HAP-1 (cell line): ENCODE measurements at regions of chr1 and their contacts with region 1.

Region 1: DNA sequence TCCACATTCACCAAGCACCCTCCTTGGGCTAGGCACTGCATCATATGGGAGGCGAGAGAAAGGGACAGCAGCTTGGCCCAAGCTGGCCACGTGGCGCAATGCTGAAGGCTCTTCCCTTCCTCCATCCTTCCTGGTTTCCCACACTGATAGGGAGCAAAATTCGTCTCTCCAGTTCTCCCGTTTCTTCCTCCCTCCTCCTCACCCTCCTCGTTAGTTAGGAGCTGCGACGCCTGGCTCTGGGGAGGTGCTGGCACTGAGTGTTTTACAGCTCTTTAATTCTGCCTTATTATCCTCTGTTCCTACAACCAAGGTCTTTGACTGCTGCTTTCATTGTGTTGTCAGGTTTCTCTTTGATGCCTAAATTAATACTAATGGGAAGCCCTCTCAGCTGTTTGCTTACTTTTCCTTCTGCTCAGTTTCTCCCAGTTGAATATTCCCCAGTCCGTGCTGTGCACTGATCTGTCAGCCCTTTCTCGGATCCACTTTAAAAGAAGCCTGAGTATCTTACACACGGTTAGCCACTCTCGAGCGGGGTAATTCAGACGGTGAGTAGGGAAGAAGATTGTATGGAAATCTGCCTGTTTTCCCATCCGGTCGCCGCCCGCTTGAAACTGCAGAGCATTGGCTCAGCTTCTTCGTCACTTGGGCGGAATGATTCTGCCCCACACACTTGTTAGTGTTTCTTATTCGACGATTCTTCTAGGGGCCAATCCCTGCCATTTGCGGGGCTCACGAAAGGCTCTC is 56.2 kb upstream of the SMYD2 start:
- DNase-seq: no peak
- H3K4me3 ChIP-seq: no peak overlapping the region
- H3K4me1 ChIP-seq: no peaks in the 10 kb centered on the region
- H3K27me3 ChIP-seq: no peaks in the 10 kb centered on the region

Region 2: GRCh38 chr1:214066190-214066589 is 158.6 kb before region 1 on chr1:
- in situ Hi-C with region 1: no loop called
- DNase-seq: no peak
- H3K4me3 ChIP-seq: no peak overlapping the region
- H3K4me1 ChIP-seq: no peaks in the 10 kb centered on the region
- H3K27me3 ChIP-seq: peaks cover 11% of the 10 kb centered on the region; the same call in 1 of the 2 replicates

Region 3: GRCh38 chr1:214146523-214146922 is 78.3 kb before region 1 on chr1:
- in situ Hi-C with region 1: no loop called
- DNase-seq: no peak
- H3K4me3 ChIP-seq: no peak overlapping the region
- H3K4me1 ChIP-seq: peaks cover 7% of the 10 kb centered on the region; the same call in 1 of the 2 replicates
- H3K27me3 ChIP-seq: no peaks in the 10 kb centered on the region

Region 4: DNA sequence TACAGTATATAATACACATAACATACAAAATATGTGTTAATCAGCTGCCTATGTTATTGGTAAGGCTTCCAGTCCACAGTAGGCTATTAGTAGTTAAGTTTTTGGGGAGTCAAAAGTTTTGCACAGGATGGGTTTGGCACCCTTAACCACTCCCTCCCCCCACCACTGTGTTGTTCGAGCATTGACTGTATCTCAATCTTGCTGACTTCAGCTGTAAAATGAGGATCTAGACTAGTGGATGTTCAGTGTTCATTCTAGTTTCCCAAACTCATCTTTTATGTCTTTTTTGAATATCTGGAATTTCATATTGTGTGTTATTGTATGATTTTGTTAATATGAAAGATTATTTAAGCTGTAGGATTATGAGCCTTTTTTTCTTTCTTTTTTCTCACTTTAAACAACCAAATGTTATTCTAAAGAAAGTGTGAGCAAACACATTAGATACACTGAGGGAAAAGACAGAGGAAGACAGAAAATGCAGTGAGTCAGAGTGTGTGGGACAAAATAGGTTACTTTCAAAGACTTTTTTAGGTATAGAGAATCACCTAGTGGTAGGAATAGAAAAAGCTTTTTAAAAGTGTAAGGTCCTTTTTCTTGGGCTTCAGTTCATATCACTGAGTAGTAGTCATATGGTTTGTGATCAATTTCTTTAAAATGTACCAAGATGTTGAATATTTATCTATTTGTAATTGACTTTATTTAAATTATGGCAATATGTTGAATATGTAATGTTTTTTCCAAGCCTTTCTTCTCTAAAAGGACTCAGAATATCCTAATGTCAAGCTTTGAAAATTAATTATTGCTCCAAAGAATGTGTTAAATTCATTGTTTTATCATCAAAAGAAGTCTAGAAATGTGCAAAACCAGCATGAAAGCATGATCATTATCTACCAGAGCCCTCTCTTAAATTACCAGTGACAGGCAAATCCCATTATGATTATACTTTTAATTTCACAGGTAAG is 360.3 kb after region 1 on chr1:
- in situ Hi-C with region 1: loop called (anchors 25 kb)
- DNase-seq: peak in 1 of 2 experiments; percentile 54
- H3K4me3 ChIP-seq: no peak overlapping the region
- H3K4me1 ChIP-seq: no peaks in the 10 kb centered on the region
- H3K27me3 ChIP-seq: no peaks in the 10 kb centered on the region; the same call in 1 of the 2 replicates